Breast epithelium (tissue), 4 donors: ENCODE measurements at regions of chr4 and their contacts with region 1.

Region 1: DNA sequence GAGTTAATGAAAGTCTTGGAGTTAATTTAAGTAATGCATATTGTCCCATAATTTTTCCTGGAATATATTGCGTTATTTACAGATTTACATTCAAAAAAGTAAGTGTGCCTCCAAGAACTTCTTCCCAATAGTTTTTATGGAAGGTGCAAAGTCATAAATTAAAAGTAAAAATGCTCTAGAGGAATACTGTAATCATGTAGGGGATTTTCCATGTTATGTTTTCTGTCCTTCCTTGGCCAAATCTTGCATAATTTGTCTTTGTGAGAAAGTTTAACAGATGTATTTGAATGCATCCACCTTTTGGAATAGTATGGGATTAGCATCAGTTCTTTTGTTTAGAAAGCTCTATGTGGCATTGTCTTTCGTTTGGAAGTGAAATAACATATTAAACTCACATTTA is 144.1 kb upstream of the GIMD1 start:
- DNase-seq: no peak
- H3K4me3 ChIP-seq: no peak overlapping the region
- H3K27ac ChIP-seq: no peak overlapping the region
- H3K4me1 ChIP-seq: no peaks in the 10 kb centered on the region
- H3K27me3 ChIP-seq: no peaks in the 10 kb centered on the region
- CTCF ChIP-seq: no peak
- POLR2A ChIP-seq: no peak

Region 2: DNA sequence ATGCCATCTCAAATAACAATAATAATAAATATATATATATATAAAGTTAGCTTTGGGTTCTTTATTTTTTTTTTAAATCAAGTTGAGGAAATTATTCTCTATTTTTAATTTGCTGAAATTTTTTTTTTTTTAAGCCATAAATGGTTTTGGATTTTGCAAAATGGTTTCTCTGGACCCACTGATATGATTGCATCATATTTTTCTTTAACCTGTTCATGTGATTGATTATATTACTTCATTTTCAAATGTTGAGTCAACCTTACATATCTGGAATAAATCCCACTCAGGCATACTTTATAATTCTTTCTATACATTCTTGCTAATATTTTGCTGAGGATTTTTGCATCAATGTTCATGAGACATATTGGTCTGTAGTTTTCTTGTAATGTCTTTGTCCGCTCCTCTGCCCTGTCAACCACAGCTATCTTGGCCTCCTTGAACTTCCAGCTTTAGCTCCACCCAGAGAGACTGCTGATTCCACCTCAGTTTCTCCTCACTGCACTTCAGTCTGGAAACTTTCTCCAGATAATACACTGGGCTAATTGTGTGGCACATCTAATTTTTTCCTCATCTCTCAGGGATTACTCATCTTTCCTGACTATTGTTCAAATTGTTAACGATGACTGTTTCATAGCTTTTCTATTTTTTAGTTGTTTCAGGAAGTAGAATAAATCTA is 16.8 kb after region 1 on chr4:
- intact Hi-C with region 1: no loop called
- DNase-seq: no peak
- H3K4me3 ChIP-seq: no peak overlapping the region
- H3K27ac ChIP-seq: no peak overlapping the region
- H3K4me1 ChIP-seq: no peaks in the 10 kb centered on the region
- H3K27me3 ChIP-seq: no peaks in the 10 kb centered on the region
- CTCF ChIP-seq: no peak
- POLR2A ChIP-seq: no peak

Region 3: DNA sequence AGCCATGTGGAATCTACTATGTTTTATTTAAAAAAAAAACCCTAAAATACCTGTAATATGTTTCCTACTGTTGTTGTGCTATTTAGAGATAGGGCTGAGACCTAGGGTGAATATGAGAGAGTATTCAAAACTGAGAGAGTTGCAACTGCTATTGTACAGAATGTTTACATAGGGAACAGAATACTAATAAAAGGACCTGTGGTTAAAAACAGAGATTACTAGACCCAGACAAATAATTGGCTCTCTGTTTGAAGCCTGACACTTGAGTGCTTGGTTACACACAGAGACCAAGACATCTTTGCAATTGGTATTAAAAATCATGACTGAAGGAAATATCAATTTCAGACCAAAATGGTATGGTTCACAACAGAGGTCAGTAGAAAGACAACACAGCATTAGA is 134.7 kb after region 1 on chr4:
- intact Hi-C with region 1: loop called (anchors 10 kb)
- DNase-seq: no peak
- H3K4me3 ChIP-seq: no peak overlapping the region
- H3K27ac ChIP-seq: no peak overlapping the region
- H3K4me1 ChIP-seq: no peaks in the 10 kb centered on the region
- H3K27me3 ChIP-seq: no peaks in the 10 kb centered on the region
- CTCF ChIP-seq: no peak
- POLR2A ChIP-seq: no peak